Adrenal gland (tissue), 19 donors: ENCODE measurements at regions of chrX and their contacts with region 1.

Region 1: GRCh38 chrX:66200855-66201795 is 37.1 kb downstream of the HEPH start:
- DNase-seq: no peak
- H3K4me3 ChIP-seq: no peak overlapping the region
- H3K27ac ChIP-seq: no peak overlapping the region
- H3K4me1 ChIP-seq: no peaks in the 10 kb centered on the region
- H3K27me3 ChIP-seq: peaks cover 8% of the 10 kb centered on the region
- CTCF ChIP-seq: peak in 5 of 6 experiments; percentile 9 to 44 (median 40)
- POLR2A ChIP-seq: no peak

Region 2: DNA sequence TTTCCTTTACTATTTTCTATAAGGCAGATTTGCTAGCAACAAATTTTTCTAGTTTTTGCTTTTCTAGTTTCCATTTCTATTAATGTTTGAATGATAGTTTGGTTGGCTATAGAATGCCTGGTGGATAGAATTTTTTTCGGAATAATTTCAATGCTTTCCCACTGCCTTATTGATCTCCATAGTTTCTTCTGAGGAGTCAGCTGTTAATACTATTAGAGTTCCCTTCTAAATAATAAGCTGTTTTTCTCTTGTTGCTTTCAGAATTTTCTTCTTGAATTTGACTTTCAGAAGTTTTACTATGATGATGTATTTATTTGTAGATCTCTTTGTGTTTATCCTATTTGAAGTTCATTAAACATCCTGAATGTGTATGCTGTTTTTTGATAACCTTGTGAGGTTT is 253.0 kb before region 1 on chrX:
- intact Hi-C with region 1: no loop called
- DNase-seq: no peak
- H3K4me3 ChIP-seq: no peak overlapping the region
- H3K27ac ChIP-seq: no peak overlapping the region
- H3K4me1 ChIP-seq: no peaks in the 10 kb centered on the region
- H3K27me3 ChIP-seq: peaks cover 14% of the 10 kb centered on the region
- CTCF ChIP-seq: no peak
- POLR2A ChIP-seq: no peak

Region 3: GRCh38 chrX:66728818-66729271 is 527.7 kb after region 1 on chrX:
- intact Hi-C with region 1: loop called in 1 of 2 experiments (anchors 5 kb)
- DNase-seq: peak; percentile 35 to 80 (median 61)
- H3K4me3 ChIP-seq: peak overlapping the region in 1 of 4 donors; percentile 40
- H3K27ac ChIP-seq: no peak overlapping the region
- H3K4me1 ChIP-seq: no peaks in the 10 kb centered on the region
- H3K27me3 ChIP-seq: no peaks in the 10 kb centered on the region
- CTCF ChIP-seq: peak; percentile 49 to 78 (median 61)
- POLR2A ChIP-seq: no peak